Body of pancreas (tissue), 4 donors: ENCODE measurements at regions of chr12 and their contacts with region 1.

Region 1: GRCh38 chr12:108950991-108951739 is 69.7 kb downstream of the SVOP start:
- DNase-seq: peak; percentile 75 to 86 (median 79)
- ATAC-seq: peak; percentile 83
- H3K4me3 ChIP-seq: no peak overlapping the region
- H3K27ac ChIP-seq: no peak overlapping the region
- H3K4me1 ChIP-seq: peaks cover 8% of the 10 kb centered on the region
- H3K27me3 ChIP-seq: no peaks in the 10 kb centered on the region
- CTCF ChIP-seq: peak; percentile 74 to 94 (median 86)
- POLR2A ChIP-seq: no peak

Region 2: GRCh38 chr12:109087250-109087649 is 136.1 kb after region 1 on chr12:
- intact Hi-C with region 1: loop called (anchors 10 kb)
- DNase-seq: peak; percentile 44 to 65 (median 55)
- ATAC-seq: peak; percentile 80
- H3K4me3 ChIP-seq: no peak overlapping the region
- H3K27ac ChIP-seq: peak overlapping the region in 2 of 4 donors; percentile 43 to 56
- H3K4me1 ChIP-seq: peaks cover 37% of the 10 kb centered on the region
- H3K27me3 ChIP-seq: no peaks in the 10 kb centered on the region
- CTCF ChIP-seq: no peak
- POLR2A ChIP-seq: no peak